ENCODE measurements at regions of chr7 and their contacts with region 1.

Region 1: GRCh38 chr7:131688738-131689661 is 132.6 kb upstream of the PODXL start:
- DNase-seq: peak; percentile 80
- H3K4me3 ChIP-seq: no peak overlapping the region
- H3K27ac ChIP-seq: no peak overlapping the region
- H3K4me1 ChIP-seq: no peaks in the 10 kb centered on the region
- H3K27me3 ChIP-seq: peaks cover 32% of the 10 kb centered on the region
- CTCF ChIP-seq: peak; percentile 94

Region 2: GRCh38 chr7:131859147-131859821 is 170.3 kb after region 1 on chr7:
- CTCF ChIA-PET with region 1: interaction called, 4 read pairs
- POLR2A ChIA-PET with region 1: no interaction called
- intact Hi-C with region 1: loop called (anchors 5 kb)
- DNase-seq: peak; percentile 77
- H3K4me3 ChIP-seq: no peak overlapping the region
- H3K27ac ChIP-seq: no peak overlapping the region
- H3K4me1 ChIP-seq: no peaks in the 10 kb centered on the region
- H3K27me3 ChIP-seq: no peaks in the 10 kb centered on the region
- CTCF ChIP-seq: peak; percentile 91

Region 3: DNA sequence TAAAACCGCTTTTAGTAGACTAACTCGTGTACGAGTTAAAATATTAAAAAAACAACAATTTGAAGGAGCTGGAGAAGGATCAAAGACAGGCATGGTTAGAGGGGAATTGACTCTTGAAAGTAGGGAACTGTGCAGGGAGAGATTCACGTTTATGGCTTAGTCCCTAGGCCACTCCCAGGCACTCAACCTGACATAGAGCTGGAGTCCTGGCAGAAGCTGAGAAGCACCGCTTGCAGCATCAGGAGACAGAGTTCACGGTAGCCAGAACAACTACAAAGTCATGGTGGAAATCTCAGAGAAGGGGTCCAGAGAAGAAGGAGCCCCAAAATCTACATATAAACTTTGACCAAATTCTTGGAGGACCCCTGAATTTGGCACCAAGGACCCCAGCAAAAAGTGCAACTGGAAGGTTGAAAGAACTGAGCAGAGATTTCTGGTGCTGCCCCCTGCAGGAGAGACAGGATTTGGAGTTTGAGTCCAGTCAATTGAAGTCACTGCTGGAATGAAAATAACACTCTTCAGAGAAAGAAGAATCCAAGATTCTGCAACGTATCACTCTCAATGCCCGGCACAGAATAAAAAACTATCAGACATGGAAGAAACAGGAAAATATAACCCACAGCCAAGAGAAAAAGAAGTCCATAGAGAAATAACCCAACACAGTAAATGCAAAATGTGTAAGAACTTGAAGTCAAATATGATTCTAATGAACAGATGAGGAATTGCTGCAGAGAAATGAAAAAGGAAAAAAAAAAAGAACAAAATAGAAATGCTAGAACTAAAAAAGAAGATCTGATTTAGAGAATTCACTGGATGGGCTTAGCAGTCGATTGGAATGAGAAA is 360.7 kb after region 1 on chr7:
- CTCF ChIA-PET with region 1: interaction called, 3 read pairs
- POLR2A ChIA-PET with region 1: no interaction called
- intact Hi-C with region 1: loop called (anchors 1 kb)
- DNase-seq: peak; percentile 54
- H3K4me3 ChIP-seq: no peak overlapping the region
- H3K27ac ChIP-seq: no peak overlapping the region
- H3K4me1 ChIP-seq: no peaks in the 10 kb centered on the region
- H3K27me3 ChIP-seq: peaks cover 12% of the 10 kb centered on the region
- CTCF ChIP-seq: peak; percentile 87

Region 4: GRCh38 chr7:132249614-132249972 is 560.6 kb after region 1 on chr7:
- CTCF ChIA-PET with region 1: interaction called, 5 read pairs
- POLR2A ChIA-PET with region 1: no interaction called
- intact Hi-C with region 1: loop called (anchors 10 kb)
- DNase-seq: peak; percentile 10
- H3K4me3 ChIP-seq: no peak overlapping the region
- H3K27ac ChIP-seq: no peak overlapping the region
- H3K4me1 ChIP-seq: no peaks in the 10 kb centered on the region
- H3K27me3 ChIP-seq: peaks cover 40% of the 10 kb centered on the region
- CTCF ChIP-seq: no peak

Region 5: DNA sequence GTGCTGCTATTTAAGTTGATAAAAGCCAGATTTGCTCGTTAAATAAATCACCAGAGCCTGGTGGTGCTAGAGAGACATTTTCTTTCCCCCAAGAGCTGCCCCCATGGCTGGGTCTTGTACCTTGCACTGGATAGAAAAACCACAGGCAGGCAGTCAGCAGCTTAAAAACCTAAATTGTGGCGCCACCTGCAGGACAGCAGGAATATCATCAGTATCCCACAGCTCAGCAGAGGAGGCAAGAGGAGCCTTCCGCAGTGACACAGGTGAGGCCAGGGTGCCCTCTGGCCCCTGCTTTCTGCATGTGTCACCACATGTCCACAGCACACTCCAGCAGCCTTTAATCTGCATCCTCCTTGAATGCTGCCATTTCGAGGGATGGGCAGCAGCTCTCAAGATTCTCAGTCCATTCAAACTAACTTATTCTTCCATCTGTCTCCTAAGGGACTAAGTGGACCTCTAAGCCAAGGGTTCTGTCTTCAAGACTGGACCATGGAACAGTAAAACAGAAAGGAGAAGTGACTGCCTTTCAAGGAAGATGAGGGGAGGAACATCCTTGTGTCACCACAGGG is 891.8 kb after region 1 on chr7:
- CTCF ChIA-PET with region 1: interaction called, 6 read pairs
- POLR2A ChIA-PET with region 1: no interaction called
- intact Hi-C with region 1: loop called (anchors 5 kb)
- DNase-seq: peak; percentile 78
- H3K4me3 ChIP-seq: no peak overlapping the region
- H3K27ac ChIP-seq: no peak overlapping the region
- H3K4me1 ChIP-seq: peaks cover 9% of the 10 kb centered on the region
- H3K27me3 ChIP-seq: peaks cover 47% of the 10 kb centered on the region
- CTCF ChIP-seq: peak; percentile 76